ENCODE measurements at regions of chr11 and their contacts with region 1.

Region 1: GRCh38 chr11:83193315-83194280 is at the start of gene ANKRD42:
- DNase-seq: peak; percentile 95 to 96
- H3K4me3 ChIP-seq: peak within 1 kb of the TSS; percentile 75 to 81
- H3K27ac ChIP-seq: peak within 1 kb of the TSS; percentile 83 to 89
- H3K4me1 ChIP-seq: peaks cover 0 to 46% (median 34%) of the 10 kb centered on the region in 4 donors
- H3K27me3 ChIP-seq: no peaks in the 10 kb centered on the region
- CTCF ChIP-seq: no peak

Region 2: DNA sequence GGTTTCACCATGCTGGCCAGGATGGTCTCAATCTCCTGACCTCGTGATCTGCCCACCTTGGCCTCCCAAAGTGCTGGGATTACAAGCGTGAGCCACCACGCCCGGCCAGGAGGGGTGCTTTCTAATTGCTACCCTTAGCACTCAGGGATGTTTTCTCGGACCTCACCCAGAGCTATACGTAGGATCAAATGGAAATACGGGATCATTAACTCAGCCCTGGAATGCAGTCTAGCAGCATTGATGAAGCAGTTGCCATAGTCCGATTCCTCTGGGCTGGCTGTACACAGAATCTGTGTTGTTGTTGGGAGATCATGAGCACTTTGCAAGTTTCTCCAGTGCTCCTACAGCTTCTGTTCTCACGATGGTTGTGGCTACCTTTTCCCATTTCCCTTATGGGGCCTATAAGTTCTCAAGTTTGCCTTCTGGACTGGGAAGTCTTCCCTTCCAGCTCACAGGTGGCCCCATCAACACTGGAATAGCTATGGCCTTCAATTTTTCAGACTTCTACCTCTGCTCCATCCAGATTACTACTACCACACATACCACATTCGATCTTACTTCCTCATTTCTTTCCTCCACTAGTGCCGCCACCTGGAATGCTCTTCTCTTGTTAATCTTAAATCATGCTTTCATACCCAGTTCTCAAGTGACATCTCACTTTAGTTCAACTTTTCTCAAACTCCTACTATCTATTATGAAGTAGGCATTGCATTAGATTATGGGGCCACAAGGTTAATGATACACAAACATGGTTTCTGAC is 52.7 kb before region 1 on chr11:
- intact Hi-C with region 1: no loop called
- DNase-seq: no peak
- H3K4me3 ChIP-seq: no peak overlapping the region
- H3K27ac ChIP-seq: peak overlapping the region in 1 of 2 donors; percentile 1
- H3K4me1 ChIP-seq: peaks cover 0 to 16% (median 3%) of the 10 kb centered on the region in 4 donors
- H3K27me3 ChIP-seq: no peaks in the 10 kb centered on the region
- CTCF ChIP-seq: no peak

Region 3: DNA sequence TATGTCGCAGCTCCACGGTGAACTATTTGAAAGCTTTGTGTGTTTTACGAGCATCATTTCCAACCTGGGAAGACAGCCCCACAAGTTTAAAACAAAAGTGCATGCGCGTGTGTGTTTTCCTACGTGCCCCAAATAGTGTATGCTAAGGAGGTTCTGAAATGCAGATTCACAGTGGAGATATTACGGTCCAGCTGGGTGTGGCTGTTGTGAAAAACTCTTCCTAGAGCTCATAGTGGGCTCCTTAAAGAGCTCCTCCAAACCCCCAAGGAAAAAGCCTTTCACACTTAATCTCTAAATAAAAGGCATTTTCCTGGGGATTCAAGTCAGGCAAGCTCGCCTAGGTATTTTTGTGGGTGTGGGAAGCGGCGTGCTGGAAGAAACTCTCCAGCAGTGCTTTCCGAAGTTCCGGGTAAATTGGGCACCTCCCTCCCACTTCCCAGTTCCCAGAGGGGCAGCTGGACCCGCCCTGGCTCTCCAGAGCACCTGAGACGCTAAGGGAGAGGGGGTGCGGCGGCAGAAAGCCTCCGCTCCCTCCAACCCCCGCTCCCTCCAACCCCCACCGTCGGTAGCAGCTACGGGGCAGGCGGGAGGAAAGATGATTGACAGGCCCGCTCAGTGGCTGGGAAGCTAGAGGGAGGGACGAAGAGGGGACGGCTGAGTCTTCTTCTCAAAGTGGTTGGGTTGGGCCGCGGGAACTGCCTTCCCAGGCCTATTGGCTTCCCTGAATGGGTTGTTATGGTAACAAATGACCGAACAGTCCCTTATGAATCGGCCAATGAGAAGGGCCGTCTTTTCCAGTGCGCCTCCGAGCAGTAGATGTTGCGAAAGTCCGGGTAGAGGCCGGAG is 37.2 kb before region 1 on chr11:
- intact Hi-C with region 1: loop called (anchors 2 kb)
- DNase-seq: peak; percentile 99 to 100
- H3K4me3 ChIP-seq: peak overlapping the region; percentile 60 to 88
- H3K27ac ChIP-seq: peak overlapping the region; percentile 88 to 98
- H3K4me1 ChIP-seq: peaks cover 0 to 25% (median 8%) of the 10 kb centered on the region in 4 donors
- H3K27me3 ChIP-seq: no peaks in the 10 kb centered on the region
- CTCF ChIP-seq: no peak

Region 4: GRCh38 chr11:83285771-83286528 is 92.4 kb after region 1 on chr11 and contains the start of gene CCDC90B:
- intact Hi-C with region 1: loop called (anchors 10 kb)
- DNase-seq: peak; percentile 96 to 98
- H3K4me3 ChIP-seq: peak within 1 kb of the TSS; percentile 70 to 84
- H3K27ac ChIP-seq: peak within 1 kb of the TSS; percentile 96 to 97
- H3K4me1 ChIP-seq: peaks cover 0 to 39% (median 17%) of the 10 kb centered on the region in 4 donors
- H3K27me3 ChIP-seq: no peaks in the 10 kb centered on the region
- CTCF ChIP-seq: no peak

Measured in tibial artery (tissue), 4 donors.